ENCODE measurements at regions of chr17 and their contacts with region 1.

Region 1: GRCh38 chr17:47720754-47721533 is 12.1 kb upstream of the TBX21 start:
- DNase-seq: peak in 1 of 2 experiments; percentile 69
- H3K4me3 ChIP-seq: peak overlapping the region in 1 of 4 experiments; percentile 46; a peak in 4 of 8 replicates
- H3K27ac ChIP-seq: no peak overlapping the region
- H3K4me1 ChIP-seq: peaks cover 0 to 23% (median 10%) of the 10 kb centered on the region in 4 experiments; a peak in 5 of 7 replicates
- H3K27me3 ChIP-seq: peaks cover 0 to 25% (median 22%) of the 10 kb centered on the region in 4 experiments; a peak in 6 of 7 replicates
- CTCF ChIP-seq: peak; percentile 17 to 38 (median 28); a peak in 2 of 4 replicates
- EP300 ChIP-seq: no peak
- POLR2A ChIP-seq: no peak
- RAD21 ChIP-seq: peak in 1 of 2 experiments; percentile 32; a peak in 2 of 4 replicates

Region 2: DNA sequence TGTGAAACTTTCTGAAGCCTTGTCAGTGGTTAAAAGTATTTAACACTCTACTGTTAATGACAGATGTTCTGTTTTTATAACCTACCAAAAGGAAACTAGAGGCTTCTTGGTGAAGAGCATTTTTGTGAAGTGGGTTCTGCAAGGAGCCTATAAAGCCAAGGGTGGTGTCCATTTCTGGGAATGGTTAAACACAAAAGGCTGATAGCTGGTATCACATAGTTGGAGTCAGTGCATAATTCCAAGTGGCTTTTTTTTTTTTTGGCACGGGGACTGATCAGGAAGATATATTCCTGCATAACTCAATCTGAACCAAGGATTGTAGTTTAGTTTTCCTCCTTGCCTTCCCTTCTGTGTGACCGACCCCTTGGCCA is 98.8 kb before region 1 on chr17:
- CTCF ChIA-PET with region 1: no interaction called
- POLR2A ChIA-PET with region 1: no interaction called
- DNase-seq: no peak
- H3K4me3 ChIP-seq: no peak overlapping the region
- H3K27ac ChIP-seq: no peak overlapping the region
- H3K4me1 ChIP-seq: no peaks in the 10 kb centered on the region; a peak in 1 of 7 replicates
- H3K27me3 ChIP-seq: no peaks in the 10 kb centered on the region
- CTCF ChIP-seq: no peak
- EP300 ChIP-seq: no peak
- POLR2A ChIP-seq: no peak
- RAD21 ChIP-seq: no peak

Region 3: GRCh38 chr17:47708863-47709541 is 11.9 kb before region 1 on chr17:
- CTCF ChIA-PET with region 1: interaction called, 441 read pairs
- POLR2A ChIA-PET with region 1: interaction called, 10 read pairs
- DNase-seq: peak in 1 of 2 experiments; percentile 67
- H3K4me3 ChIP-seq: peak overlapping the region; percentile 21 to 57 (median 29); a peak in 7 of 8 replicates
- H3K27ac ChIP-seq: no peak overlapping the region
- H3K4me1 ChIP-seq: peaks cover 0 to 9% (median 3%) of the 10 kb centered on the region in 4 experiments; a peak in 5 of 7 replicates
- H3K27me3 ChIP-seq: peaks cover 0 to 19% (median 5%) of the 10 kb centered on the region in 4 experiments; a peak in 4 of 7 replicates
- CTCF ChIP-seq: no peak
- EP300 ChIP-seq: no peak
- POLR2A ChIP-seq: no peak
- RAD21 ChIP-seq: no peak

Region 4: GRCh38 chr17:47733047-47733673 is 12.2 kb after region 1 on chr17 and contains the start of gene TBX21:
- CTCF ChIA-PET with region 1: interaction called, 179 read pairs
- POLR2A ChIA-PET with region 1: interaction called, 8 read pairs
- DNase-seq: peak in 1 of 2 experiments; percentile 78
- H3K4me3 ChIP-seq: peak within 1 kb of the TSS; percentile 28 to 57 (median 40)
- H3K27ac ChIP-seq: no peak within 1 kb of the TSS
- H3K4me1 ChIP-seq: peaks cover 0 to 3% (median 1%) of the 10 kb centered on the region in 4 experiments; a peak in 2 of 7 replicates
- H3K27me3 ChIP-seq: peaks cover 28 to 58% (median 50%) of the 10 kb centered on the region in 4 experiments
- CTCF ChIP-seq: peak in 1 of 3 experiments; percentile 33; a peak in 2 of 4 replicates
- EP300 ChIP-seq: no peak
- POLR2A ChIP-seq: no peak
- RAD21 ChIP-seq: peak in 1 of 2 experiments; percentile 20; a peak in 1 of 4 replicates
- total RNA-seq, gene TBX21: not detected in 2 replicates

Region 5: DNA sequence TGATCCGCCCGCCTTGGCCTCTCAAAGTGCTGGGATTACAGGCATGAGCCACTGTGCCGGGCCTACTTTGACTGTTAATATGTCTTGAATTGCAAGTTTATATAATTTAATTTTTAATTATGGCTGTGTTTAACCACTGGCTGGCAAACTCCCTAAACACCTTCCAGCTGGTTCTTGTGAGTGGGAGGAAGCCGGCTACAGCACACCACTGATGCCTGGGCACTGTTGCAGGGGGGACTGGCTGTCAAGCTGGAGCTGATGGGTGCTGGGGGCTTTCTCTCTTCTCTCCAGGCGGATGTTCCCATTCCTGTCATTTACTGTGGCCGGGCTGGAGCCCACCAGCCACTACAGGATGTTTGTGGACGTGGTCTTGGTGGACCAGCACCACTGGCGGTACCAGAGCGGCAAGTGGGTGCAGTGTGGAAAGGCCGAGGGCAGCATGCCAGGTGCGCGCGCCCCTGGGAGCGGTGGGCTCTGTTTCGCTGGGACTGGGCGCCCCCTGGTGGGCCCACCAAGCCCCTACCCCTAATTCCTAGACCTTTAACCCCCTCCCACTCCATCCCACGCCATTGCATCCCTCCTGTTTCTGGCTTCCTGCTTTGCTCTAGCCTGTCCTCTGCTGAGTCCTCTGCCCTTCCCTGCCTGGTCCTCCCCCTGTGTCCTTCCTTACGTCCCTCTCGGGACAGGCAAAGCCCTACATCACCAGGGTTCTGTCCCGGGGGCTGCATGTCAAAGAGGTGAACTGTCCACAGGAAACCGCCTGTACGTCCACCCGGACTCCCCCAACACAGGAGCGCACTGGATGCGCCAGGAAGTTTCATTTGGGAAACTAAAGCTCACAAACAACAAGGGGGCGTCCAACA is 21.6 kb after region 1 on chr17:
- CTCF ChIA-PET with region 1: interaction called, 179 read pairs
- POLR2A ChIA-PET with region 1: interaction called, 3 read pairs
- DNase-seq: peak in 1 of 2 experiments; percentile 89
- H3K4me3 ChIP-seq: no peak overlapping the region
- H3K27ac ChIP-seq: no peak overlapping the region
- H3K4me1 ChIP-seq: peaks cover 0 to 5% (median 2%) of the 10 kb centered on the region in 4 experiments; a peak in 2 of 7 replicates
- H3K27me3 ChIP-seq: 0 out of 7 replicates have a peak, but pooled peaks cover 0 to 2% (median 0%) of the 10 kb centered on the region in 4 experiments
- CTCF ChIP-seq: peak; percentile 82 to 85 (median 84)
- EP300 ChIP-seq: no peak
- POLR2A ChIP-seq: no peak
- RAD21 ChIP-seq: peak; percentile 87 to 92

Region 6: DNA sequence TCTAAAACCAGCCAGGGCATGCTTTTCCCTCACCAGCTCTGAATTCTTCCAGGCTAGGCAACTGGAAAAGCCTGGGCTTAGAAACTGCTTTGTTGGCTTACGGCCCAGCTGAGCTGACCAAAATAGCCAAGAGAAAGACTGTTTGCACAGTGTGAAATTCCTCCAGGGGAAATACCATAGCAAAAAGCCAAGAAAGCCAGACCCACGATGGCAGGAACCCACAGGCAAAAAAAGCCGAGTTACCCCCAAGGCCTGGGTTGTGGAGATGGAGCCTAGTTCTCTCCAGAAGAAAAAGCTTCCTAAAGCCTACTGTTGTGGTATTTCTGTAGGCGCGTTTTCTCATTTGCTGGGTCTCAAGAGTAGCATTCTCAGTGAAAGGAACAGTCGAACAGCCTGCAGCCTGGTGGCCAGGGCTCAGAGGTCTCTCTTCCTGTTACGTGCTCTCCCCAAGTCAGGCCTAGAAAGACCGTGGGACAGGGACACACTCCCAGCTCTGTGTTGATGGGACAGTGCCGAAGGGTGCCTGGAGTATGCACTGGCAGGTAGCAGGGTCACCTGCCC is 184.4 kb after region 1 on chr17:
- CTCF ChIA-PET with region 1: no interaction called
- POLR2A ChIA-PET with region 1: no interaction called
- DNase-seq: no peak
- H3K4me3 ChIP-seq: no peak overlapping the region
- H3K27ac ChIP-seq: no peak overlapping the region
- H3K4me1 ChIP-seq: peaks cover 8 to 17% (median 12%) of the 10 kb centered on the region in 4 experiments
- H3K27me3 ChIP-seq: no peaks in the 10 kb centered on the region
- CTCF ChIP-seq: no peak
- EP300 ChIP-seq: no peak
- POLR2A ChIP-seq: no peak
- RAD21 ChIP-seq: no peak

Measured in H1 (cell line).